ENCODE measurements at regions of chr2 and their contacts with region 1.

Region 1: DNA sequence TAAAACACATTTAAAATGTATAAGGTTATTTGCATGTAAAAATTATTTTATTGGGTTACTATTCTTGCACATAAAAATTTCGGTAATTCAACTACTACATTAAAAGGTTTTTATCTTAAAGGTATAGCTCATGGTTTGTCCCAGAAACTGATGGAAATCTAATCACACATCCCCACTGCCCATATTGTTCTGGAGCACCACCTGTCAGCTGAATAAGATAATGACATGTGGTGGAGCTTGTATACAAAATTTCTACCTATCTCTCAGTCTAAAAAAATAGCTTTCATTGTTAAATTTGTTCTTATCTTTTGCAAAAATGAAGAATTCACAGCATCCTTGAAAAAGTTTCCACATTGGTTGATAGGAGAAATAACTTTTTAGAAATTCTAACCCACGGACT is 18.3 kb downstream of the ERBB4 start:
- DNase-seq: peak; percentile 26
- H3K4me3 ChIP-seq: no peak overlapping the region
- H3K27ac ChIP-seq: no peak overlapping the region
- H3K4me1 ChIP-seq: no peaks in the 10 kb centered on the region; a peak in 1 of 4 replicates
- H3K27me3 ChIP-seq: no peaks in the 10 kb centered on the region
- CTCF ChIP-seq: peak; percentile 56
- EP300 ChIP-seq: no peak
- RAD21 ChIP-seq: peak; percentile 78

Region 2: GRCh38 chr2:212145121-212145520 is 375.2 kb before region 1 on chr2:
- CTCF ChIA-PET with region 1: interaction called, 17 read pairs
- POLR2A ChIA-PET with region 1: no interaction called
- DNase-seq: no peak
- H3K4me3 ChIP-seq: no peak overlapping the region
- H3K27ac ChIP-seq: peak overlapping the region in 1 of 2 experiments; percentile 18; a peak in 1 of 4 replicates
- H3K4me1 ChIP-seq: no peaks in the 10 kb centered on the region
- H3K27me3 ChIP-seq: no peaks in the 10 kb centered on the region
- CTCF ChIP-seq: no peak
- EP300 ChIP-seq: no peak
- RAD21 ChIP-seq: no peak

Region 3: GRCh38 chr2:212536817-212537725 is 16.7 kb after region 1 on chr2:
- CTCF ChIA-PET with region 1: interaction called, 10 read pairs
- POLR2A ChIA-PET with region 1: no interaction called
- DNase-seq: peak; percentile 44
- H3K4me3 ChIP-seq: peak overlapping the region; percentile 65 to 72
- H3K27ac ChIP-seq: no peak overlapping the region
- H3K4me1 ChIP-seq: peaks cover 6 to 11% of the 10 kb centered on the region in 2 experiments; a peak in 3 of 4 replicates
- H3K27me3 ChIP-seq: peaks cover 33% of the 10 kb centered on the region
- CTCF ChIP-seq: no peak
- EP300 ChIP-seq: no peak
- RAD21 ChIP-seq: no peak